ENCODE measurements at regions of chr5 and their contacts with region 1.

Region 1: DNA sequence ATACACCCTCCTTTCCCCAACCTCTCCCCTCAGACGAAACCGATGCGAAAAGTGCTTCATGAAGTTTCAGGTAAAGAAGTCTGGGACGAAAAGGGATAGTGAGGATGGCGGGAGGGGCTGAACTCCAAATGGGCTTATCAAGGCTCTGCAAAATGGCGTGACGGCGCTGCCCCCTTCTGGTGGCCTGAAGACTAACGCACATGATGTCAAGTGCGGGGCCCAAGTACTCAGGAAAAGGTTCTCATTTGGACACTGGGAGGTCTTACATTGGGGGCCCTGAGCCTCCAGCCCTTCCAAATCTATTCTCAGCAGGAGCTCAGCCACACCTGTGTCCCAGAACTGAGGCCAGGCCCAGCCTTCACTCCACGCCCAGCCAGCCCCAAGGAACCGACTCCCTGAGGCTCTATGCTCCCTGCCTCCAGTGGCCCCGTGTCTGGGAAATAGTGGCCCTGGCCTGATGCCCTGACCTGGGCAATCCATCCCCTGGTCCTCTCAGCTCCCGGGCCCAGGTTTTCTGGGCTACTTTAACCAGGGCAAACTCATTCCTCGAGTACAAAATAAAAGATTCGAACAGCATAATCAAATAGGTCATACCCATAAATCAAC is 119.9 kb downstream of the KCNIP1 start:
- DNase-seq: peak; percentile 76
- ATAC-seq: peak; percentile 77
- H3K4me3 Mint-ChIP-seq: no peak overlapping the region
- H3K27ac Mint-ChIP-seq: no peak overlapping the region
- H3K4me1 Mint-ChIP-seq: no peaks in the 10 kb centered on the region
- H3K27me3 Mint-ChIP-seq: no peaks in the 10 kb centered on the region

Region 2: DNA sequence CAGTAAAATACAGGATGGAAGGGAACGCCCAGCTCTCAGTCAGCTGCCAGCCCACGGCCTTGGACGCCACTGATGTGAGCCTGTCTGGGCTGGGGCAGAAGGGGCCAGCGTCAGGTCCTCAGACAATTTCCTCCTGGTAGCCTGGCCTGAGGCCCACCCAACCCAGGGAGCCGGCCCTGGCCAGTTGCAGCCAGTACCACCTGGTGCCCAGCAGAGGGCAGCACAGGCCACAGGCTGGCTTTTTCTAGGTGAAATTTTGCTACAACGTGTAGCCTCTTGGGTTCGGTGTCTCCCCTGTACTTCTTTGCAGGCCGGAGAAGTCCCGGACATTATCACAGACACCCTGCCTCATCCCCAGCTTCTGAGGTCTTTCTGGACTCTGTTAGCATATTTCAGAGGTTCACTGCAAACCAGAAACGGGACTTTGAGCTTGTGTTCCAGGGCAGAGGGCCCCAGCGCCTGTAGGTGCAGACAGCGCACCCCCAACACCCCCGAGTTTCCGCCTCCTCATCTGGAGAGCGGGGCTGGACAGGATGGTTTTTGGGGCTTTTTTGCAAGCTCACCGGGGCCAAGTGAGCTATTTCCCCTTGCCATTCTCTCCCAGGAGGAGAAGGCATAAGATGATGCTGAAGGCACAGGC is 188.6 kb before region 1 on chr5:
- CTCF ChIA-PET with region 1: interaction called, 19 read pairs
- POLR2A ChIA-PET with region 1: no interaction called
- intact Hi-C with region 1: loop called (anchors 1 kb)
- DNase-seq: peak; percentile 78
- ATAC-seq: peak; percentile 76
- H3K4me3 Mint-ChIP-seq: no peak overlapping the region
- H3K27ac Mint-ChIP-seq: no peak overlapping the region
- H3K4me1 Mint-ChIP-seq: no peaks in the 10 kb centered on the region
- H3K27me3 Mint-ChIP-seq: no peaks in the 10 kb centered on the region

Region 3: DNA sequence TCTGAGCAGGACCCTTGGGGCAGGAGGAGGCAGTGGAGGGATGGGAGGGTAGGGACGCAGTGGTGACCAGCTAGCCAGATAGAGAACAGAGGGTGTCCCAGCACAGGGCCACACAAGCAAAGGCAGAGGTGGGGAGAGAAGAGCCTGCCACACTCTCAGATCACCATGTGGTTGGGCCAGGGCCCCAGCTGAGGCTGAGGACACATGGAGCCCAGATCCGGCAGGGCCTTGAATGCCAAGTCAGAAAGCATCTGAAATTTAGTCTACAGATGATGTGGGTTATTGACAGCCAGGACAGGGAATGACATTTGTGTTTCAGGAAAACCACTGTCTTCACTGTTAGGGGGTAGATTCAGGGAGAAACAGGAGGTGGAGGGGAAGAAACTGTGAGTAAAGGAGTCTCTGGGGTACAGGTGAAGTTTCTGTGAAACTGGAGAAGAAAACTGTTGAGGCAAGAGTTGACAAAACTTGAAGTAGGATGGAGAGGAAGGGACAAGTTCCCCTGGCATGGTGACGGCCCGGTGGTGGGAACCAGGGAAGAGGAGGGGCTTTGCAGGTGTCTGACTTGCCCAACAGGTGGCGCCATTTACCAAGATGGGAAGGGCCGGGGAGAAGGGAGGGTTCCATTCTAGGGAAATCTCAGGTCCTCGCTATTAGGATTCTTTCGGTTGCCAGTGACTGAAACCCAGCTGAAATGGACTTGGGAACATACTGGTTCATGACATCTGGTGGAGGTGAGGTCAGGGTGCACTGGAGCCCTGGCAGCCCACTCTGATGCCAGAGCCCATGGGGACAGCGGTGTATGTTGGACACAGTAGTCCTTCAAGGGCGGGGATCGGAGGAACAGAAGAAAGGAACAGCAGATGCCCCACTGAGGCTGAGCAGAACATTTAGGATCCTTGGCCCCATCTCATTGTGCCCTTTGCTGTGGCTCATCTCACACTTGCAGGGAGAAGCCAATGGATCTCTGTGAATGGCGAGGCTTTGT is 19.8 kb before region 1 on chr5:
- CTCF ChIA-PET with region 1: interaction called, 3 read pairs
- POLR2A ChIA-PET with region 1: no interaction called
- intact Hi-C with region 1: loop called in 1 of 2 experiments (anchors 1 kb)
- DNase-seq: peak; percentile 81
- ATAC-seq: peak; percentile 88
- H3K4me3 Mint-ChIP-seq: no peak overlapping the region
- H3K27ac Mint-ChIP-seq: no peak overlapping the region
- H3K4me1 Mint-ChIP-seq: peaks cover under 1% of the 10 kb centered on the region
- H3K27me3 Mint-ChIP-seq: peaks cover 33% of the 10 kb centered on the region